ENCODE measurements at regions of chr1 and their contacts with region 1.

Region 1: GRCh38 chr1:115595279-115596079 is 46.3 kb upstream of the VANGL1 start:
- DNase-seq: peak; percentile 91
- H3K4me3 ChIP-seq: no peak overlapping the region
- H3K27ac ChIP-seq: peak overlapping the region; percentile 42
- H3K4me1 ChIP-seq: peaks cover 23% of the 10 kb centered on the region
- H3K27me3 ChIP-seq: no peaks in the 10 kb centered on the region
- CTCF ChIP-seq: peak; percentile 94

Region 2: GRCh38 chr1:114982251-114982650 is 613.2 kb before region 1 on chr1:
- intact Hi-C with region 1: loop called (anchors 5 kb)
- DNase-seq: no peak
- H3K4me3 ChIP-seq: no peak overlapping the region
- H3K27ac ChIP-seq: no peak overlapping the region
- H3K4me1 ChIP-seq: no peaks in the 10 kb centered on the region
- H3K27me3 ChIP-seq: peaks cover 14% of the 10 kb centered on the region
- CTCF ChIP-seq: no peak

Region 3: GRCh38 chr1:115811140-115811828 is 215.8 kb after region 1 on chr1:
- intact Hi-C with region 1: no loop called
- DNase-seq: no peak
- H3K4me3 ChIP-seq: no peak overlapping the region
- H3K27ac ChIP-seq: no peak overlapping the region
- H3K4me1 ChIP-seq: peaks cover 31% of the 10 kb centered on the region
- H3K27me3 ChIP-seq: no peaks in the 10 kb centered on the region
- CTCF ChIP-seq: no peak

Measured in left ventricle myocardium inferior (tissue), 1 donor.